Activated CD4-positive, alpha-beta memory T cell treated with anti-CD3 and anti-CD28 coated beads for 36 hours (primary cell): ENCODE measurements at regions of chr6 and their contacts with region 1.

Region 1: GRCh38 chr6:170516783-170517616 is 36.1 kb downstream of the PSMB1 start:
- DNase-seq: peak; percentile 46
- H3K4me3 Mint-ChIP-seq: no peak overlapping the region
- H3K27ac Mint-ChIP-seq: no peak overlapping the region
- H3K4me1 Mint-ChIP-seq: no peaks in the 10 kb centered on the region
- H3K27me3 Mint-ChIP-seq: peaks cover 6% of the 10 kb centered on the region

Region 2: DNA sequence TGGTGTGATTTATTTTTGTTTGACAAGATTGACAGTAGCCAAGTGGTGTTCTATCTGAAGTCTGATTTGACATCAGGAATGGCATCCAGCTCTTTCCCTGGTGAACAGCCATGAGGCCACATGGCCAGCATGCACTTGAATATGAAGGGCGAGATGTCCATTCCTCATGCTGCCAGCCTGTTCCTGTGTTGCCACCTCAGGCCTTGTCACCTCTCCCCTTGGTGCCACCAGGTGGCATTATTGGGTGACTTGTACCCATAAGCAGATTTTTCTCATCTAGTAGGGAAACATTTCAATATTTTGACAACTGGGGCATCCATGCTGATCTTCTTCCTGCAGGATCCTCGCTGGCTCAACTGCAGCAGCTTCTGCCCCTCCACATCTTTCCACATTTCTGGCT is 566.4 kb before region 1 on chr6:
- CTCF ChIA-PET with region 1: interaction called, 15 read pairs
- POLR2A ChIA-PET with region 1: no interaction called
- intact Hi-C with region 1: loop called (anchors 1 kb)
- DNase-seq: peak; percentile 42
- H3K4me3 Mint-ChIP-seq: no peak overlapping the region
- H3K27ac Mint-ChIP-seq: no peak overlapping the region
- H3K4me1 Mint-ChIP-seq: no peaks in the 10 kb centered on the region
- H3K27me3 Mint-ChIP-seq: no peaks in the 10 kb centered on the region

Region 3: DNA sequence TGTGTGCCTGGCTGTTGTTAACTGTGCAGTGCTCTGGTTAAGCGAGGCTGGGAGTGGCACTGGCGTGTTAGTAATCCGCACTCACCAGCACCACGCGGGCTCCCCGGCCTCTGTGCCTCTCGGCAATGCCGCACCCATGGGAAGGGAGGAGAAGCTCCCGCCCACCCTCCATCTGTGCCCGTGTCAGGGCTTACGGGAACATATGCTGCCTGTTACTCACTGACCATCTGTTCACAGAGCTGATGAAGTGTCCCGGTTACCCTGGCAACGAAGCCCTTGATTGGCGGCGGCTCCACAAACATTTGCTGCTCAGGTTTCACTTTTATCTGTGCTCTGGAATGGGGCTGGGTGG is 78.6 kb before region 1 on chr6:
- CTCF ChIA-PET with region 1: interaction called, 4 read pairs
- POLR2A ChIA-PET with region 1: no interaction called
- intact Hi-C with region 1: loop called (anchors 10 kb)
- DNase-seq: peak; percentile 71
- H3K4me3 Mint-ChIP-seq: no peak overlapping the region
- H3K27ac Mint-ChIP-seq: no peak overlapping the region
- H3K4me1 Mint-ChIP-seq: no peaks in the 10 kb centered on the region
- H3K27me3 Mint-ChIP-seq: peaks cover 6% of the 10 kb centered on the region